Posterior cingulate gyrus (tissue), 11 donors: ENCODE measurements at regions of chr11 and their contacts with region 1.

Region 1: GRCh38 chr11:32176223-32176934 is 85.5 kb downstream of the RCN1 start:
- DNase-seq: peak; percentile 41 to 94 (median 84)

Region 2: GRCh38 chr11:31107062-31107461 is 1069.3 kb before region 1 on chr11:
- intact Hi-C with region 1: loop called (anchors 5 kb)
- DNase-seq: peak in 8 of 10 donors; percentile 24 to 93 (median 58)

Region 3: GRCh38 chr11:31240338-31240904 is 936.0 kb before region 1 on chr11:
- intact Hi-C with region 1: loop called (anchors 5 kb)
- DNase-seq: peak in 3 of 10 donors; percentile 3 to 19 (median 16)

Region 4: GRCh38 chr11:32052218-32052617 is 124.2 kb before region 1 on chr11:
- intact Hi-C with region 1: loop called (anchors 1 kb)
- DNase-seq: peak in 8 of 10 donors; percentile 36 to 90 (median 62)

Region 5: GRCh38 chr11:32297611-32298011 is 121.2 kb after region 1 on chr11:
- intact Hi-C with region 1: loop called (anchors 10 kb)
- DNase-seq: peak in 4 of 10 donors; percentile 13 to 77 (median 40)